H1 (cell line): ENCODE measurements at regions of chr20 and their contacts with region 1.

Region 1: GRCh38 chr20:39398656-39399055 is 436.5 kb downstream of the DHX35 start:
- DNase-seq: no peak
- H3K4me3 ChIP-seq: no peak overlapping the region
- H3K27ac ChIP-seq: no peak overlapping the region
- H3K4me1 ChIP-seq: no peaks in the 10 kb centered on the region
- H3K27me3 ChIP-seq: no peaks in the 10 kb centered on the region
- CTCF ChIP-seq: peak in 2 of 3 experiments; percentile 33 to 42; a peak in 2 of 4 replicates
- EP300 ChIP-seq: no peak
- POLR2A ChIP-seq: no peak
- RAD21 ChIP-seq: peak; percentile 51 to 70

Region 2: DNA sequence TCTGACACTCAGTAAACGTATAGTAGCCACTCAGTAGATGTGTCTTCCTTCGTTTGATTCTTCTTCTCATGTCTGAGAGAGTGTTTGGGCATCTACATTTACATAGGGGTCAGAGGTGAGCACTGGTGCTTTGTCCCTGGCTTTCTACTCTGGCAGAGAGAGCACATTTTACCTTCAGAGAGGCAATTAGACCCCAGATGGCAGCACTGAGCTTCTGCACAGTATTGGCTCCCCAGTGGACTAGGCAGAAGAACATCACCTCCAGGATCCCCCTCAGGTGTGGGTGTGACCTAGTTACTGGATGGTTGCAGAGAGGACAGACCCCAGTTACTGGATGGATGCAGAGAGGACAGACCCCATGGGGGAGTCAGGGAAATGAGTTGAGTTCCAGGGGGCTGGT is 109.3 kb before region 1 on chr20:
- CTCF ChIA-PET with region 1: interaction called, 10 read pairs
- POLR2A ChIA-PET with region 1: no interaction called
- DNase-seq: peak in 1 of 2 experiments; percentile 66
- H3K4me3 ChIP-seq: no peak overlapping the region
- H3K27ac ChIP-seq: no peak overlapping the region
- H3K4me1 ChIP-seq: peaks cover 2 to 17% (median 10%) of the 10 kb centered on the region in 4 experiments; a peak in 5 of 7 replicates
- H3K27me3 ChIP-seq: no peaks in the 10 kb centered on the region
- CTCF ChIP-seq: peak; percentile 43 to 71 (median 70)
- EP300 ChIP-seq: no peak
- POLR2A ChIP-seq: no peak
- RAD21 ChIP-seq: peak; percentile 57 to 74; a peak in 3 of 4 replicates

Region 3: GRCh38 chr20:39516964-39517363 is 118.3 kb after region 1 on chr20:
- CTCF ChIA-PET with region 1: no interaction called
- POLR2A ChIA-PET with region 1: no interaction called
- DNase-seq: no peak
- H3K4me3 ChIP-seq: no peak overlapping the region
- H3K27ac ChIP-seq: no peak overlapping the region
- H3K4me1 ChIP-seq: no peaks in the 10 kb centered on the region
- H3K27me3 ChIP-seq: no peaks in the 10 kb centered on the region
- CTCF ChIP-seq: no peak
- EP300 ChIP-seq: no peak
- POLR2A ChIP-seq: no peak
- RAD21 ChIP-seq: no peak